Mammary epithelial cell (primary cell): ENCODE measurements at regions of chr15 and their contacts with region 1.

Region 1: DNA sequence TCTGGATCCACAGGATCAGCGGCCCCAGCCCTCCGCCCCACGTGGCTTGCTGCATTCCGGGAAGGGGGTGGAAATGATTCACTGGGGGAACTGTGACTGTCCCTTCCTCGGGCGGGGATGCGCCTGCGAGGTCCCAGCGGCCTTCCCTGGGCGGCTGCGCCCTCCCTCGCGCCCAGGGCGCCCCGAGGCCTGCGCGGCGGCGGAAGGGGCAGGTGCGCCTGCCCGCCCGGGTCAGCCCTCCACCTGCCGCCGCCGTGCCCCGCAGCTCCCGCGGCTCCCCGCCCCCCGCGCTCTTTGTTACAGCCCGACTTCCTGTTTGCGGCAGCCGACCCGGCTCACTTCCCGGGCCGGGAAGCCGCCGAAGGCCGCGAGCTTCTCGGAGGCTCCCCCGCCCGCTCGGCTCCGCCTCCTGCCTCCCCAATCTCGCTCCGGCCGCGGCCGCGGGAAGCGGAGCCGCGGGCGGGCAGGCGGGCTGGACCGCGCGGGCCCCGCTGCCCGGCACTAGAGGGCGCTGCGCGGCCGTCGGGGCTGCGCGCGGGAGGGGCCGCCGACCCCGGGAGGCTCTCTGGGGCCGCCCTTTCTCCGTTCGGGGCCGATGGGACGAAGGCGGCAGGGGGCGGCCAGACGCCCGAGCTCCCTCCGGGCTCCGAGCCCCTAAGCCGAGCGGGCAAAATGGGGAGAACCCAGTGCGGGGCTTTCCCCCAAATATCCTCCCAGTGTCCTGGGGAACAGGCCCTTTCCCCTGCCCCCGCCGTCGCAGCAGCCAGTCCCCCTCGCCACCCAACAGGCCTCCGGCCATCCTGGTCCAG is 11.5 kb upstream of the CHAC1 start:
- DNase-seq: peak; percentile 65
- H3K4me3 ChIP-seq: peak overlapping the region; percentile 37 to 49 (median 46)
- H3K27ac ChIP-seq: no peak overlapping the region
- H3K4me1 ChIP-seq: peaks cover 12% of the 10 kb centered on the region
- H3K27me3 ChIP-seq: no peaks in the 10 kb centered on the region
- CTCF ChIP-seq: peak; percentile 38 to 46

Region 2: DNA sequence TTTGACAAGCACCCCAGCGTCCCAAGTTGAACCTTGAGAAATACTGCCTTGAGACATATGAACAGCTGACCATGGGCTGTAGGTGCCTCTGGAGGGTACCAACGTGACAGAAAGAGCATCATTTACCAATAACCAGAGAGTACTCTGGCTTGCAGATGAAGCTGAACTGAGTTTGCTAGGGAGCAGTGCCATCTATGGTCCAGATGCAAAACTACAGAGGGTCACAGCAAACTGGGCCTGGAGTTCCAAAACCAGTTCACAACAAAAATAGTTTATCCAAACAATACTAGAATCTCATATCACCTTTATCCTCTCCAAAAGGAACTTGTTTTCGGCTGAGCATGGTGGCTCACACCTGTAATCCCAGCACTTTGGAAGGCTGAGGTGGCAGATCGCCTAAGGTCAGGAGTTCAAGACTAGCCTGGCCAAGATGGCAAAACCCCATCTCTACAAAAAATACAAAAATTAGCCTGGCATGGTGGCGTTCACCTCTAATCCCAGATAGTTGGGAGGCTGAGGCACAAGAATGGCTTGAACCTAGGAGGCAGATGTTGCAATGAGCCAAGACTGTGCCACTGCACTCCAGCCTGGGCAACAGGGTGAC is 80.9 kb after region 1 on chr15:
- CTCF ChIA-PET with region 1: no interaction called
- dilution Hi-C with region 1: no loop called
- in situ Hi-C with region 1: no loop called
- intact Hi-C with region 1: loop called (anchors 1 kb)
- DNase-seq: peak; percentile 16
- H3K4me3 ChIP-seq: no peak overlapping the region
- H3K27ac ChIP-seq: no peak overlapping the region
- H3K4me1 ChIP-seq: no peaks in the 10 kb centered on the region
- H3K27me3 ChIP-seq: no peaks in the 10 kb centered on the region
- CTCF ChIP-seq: peak; percentile 61 to 74